ENCODE measurements at regions of chr3 and their contacts with region 1.

Region 1: GRCh38 chr3:56347219-56347871 is 120.9 kb downstream of the ERC2 start:
- DNase-seq: peak; percentile 24
- H3K4me3 ChIP-seq: no peak overlapping the region
- H3K27ac ChIP-seq: no peak overlapping the region
- H3K4me1 ChIP-seq: no peaks in the 10 kb centered on the region
- H3K27me3 ChIP-seq: no peaks in the 10 kb centered on the region
- CTCF ChIP-seq: peak; percentile 42 to 52
- POLR2A ChIP-seq: no peak

Region 2: DNA sequence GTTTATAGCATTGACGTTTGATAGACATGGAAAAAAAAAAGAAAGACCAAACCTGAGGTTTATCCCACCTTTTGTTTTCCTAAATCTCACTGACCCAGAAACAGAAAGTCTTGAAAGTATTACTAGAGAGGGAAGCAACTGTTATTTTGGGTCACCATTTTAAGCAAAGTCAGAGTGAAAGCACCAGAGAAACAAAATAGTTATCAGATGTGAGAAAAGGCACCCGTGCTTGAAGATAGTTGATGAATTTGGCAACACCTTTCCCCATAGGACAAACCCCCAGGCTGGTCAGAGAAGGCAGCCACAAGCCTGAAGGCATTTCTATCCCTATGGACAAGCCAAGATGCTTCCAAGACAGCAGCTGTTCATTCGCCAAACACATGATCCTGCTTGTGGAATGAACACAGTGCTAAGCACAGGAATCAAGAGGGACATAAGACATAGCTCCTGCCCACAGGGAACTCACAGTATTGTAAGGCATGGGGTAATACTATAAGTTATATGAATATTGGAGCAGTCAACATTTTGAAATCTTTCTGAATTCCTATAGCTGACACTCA is 50.0 kb before region 1 on chr3:
- CTCF ChIA-PET with region 1: no interaction called
- POLR2A ChIA-PET with region 1: no interaction called
- dilution Hi-C with region 1: no loop called
- intact Hi-C with region 1: no loop called
- DNase-seq: no peak
- H3K4me3 ChIP-seq: no peak overlapping the region
- H3K27ac ChIP-seq: no peak overlapping the region
- H3K4me1 ChIP-seq: peaks cover 5% of the 10 kb centered on the region
- H3K27me3 ChIP-seq: no peaks in the 10 kb centered on the region
- CTCF ChIP-seq: no peak
- POLR2A ChIP-seq: no peak

Region 3: DNA sequence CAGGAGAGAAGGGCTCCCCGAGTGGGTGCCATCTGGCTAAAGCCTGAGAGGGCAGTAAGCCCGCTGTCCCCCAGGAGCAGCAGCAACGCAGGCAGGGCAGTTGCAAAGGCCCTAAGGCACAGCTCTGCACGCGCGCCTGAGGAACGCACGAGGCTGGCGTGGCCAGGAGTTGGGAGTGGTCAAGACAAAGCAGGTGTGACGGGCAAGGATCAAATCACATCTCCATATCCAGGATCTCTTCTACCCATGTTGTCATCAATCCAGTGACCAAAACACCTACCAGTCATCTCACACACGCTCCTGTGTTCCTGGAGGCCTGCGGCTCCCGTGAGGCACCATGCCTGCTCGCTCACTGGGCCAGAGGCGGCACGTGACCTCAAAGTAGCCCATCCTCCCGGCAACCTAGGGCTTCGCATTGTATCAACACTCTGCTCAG is 61.4 kb after region 1 on chr3:
- CTCF ChIA-PET with region 1: no interaction called
- POLR2A ChIA-PET with region 1: no interaction called
- dilution Hi-C with region 1: no loop called
- intact Hi-C with region 1: no loop called
- DNase-seq: no peak
- H3K4me3 ChIP-seq: no peak overlapping the region
- H3K27ac ChIP-seq: no peak overlapping the region
- H3K4me1 ChIP-seq: no peaks in the 10 kb centered on the region
- H3K27me3 ChIP-seq: no peaks in the 10 kb centered on the region
- CTCF ChIP-seq: no peak
- POLR2A ChIP-seq: no peak

Region 4: DNA sequence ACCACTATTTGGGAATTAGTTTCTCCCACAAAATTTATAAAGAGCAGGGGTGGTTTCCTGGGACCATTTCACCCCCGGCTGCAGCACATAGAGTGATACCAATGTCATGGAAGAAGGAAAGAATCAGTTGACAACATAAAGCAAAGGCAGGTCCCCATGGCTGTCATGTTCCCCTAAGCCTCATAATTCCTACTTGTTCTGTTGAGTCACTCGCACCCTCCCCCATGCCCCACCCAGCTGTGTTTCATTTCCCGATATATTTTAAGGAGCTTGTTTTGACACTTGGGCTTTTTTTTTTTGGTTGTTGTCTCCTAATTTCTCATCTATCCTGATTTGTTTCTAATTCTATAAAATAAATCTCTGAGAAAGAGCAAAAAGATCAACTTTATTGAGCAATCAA is 96.0 kb after region 1 on chr3:
- CTCF ChIA-PET with region 1: interaction called, 55 read pairs
- POLR2A ChIA-PET with region 1: no interaction called
- dilution Hi-C with region 1: no loop called
- intact Hi-C with region 1: loop called (anchors 1 kb)
- DNase-seq: no peak
- H3K4me3 ChIP-seq: no peak overlapping the region
- H3K27ac ChIP-seq: no peak overlapping the region
- H3K4me1 ChIP-seq: no peaks in the 10 kb centered on the region
- H3K27me3 ChIP-seq: no peaks in the 10 kb centered on the region
- CTCF ChIP-seq: no peak
- POLR2A ChIP-seq: no peak

Measured in endothelial cell of umbilical vein (primary cell).